Caco-2 (cell line): ENCODE measurements at regions of chr10 and their contacts with region 1.

Region 1: GRCh38 chr10:21495752-21496342 is 29.6 kb downstream of the SKIDA1 start:
- DNase-seq: peak; percentile 95 to 99
- H3K4me3 ChIP-seq: peak overlapping the region; percentile 92
- H3K4me3 Mint-ChIP-seq: peak overlapping the region; percentile 85
- H3K27ac Mint-ChIP-seq: peak overlapping the region; percentile 69
- H3K4me1 ChIP-seq: no peaks in the 10 kb centered on the region
- H3K4me1 Mint-ChIP-seq: no peaks in the 10 kb centered on the region
- H3K27me3 ChIP-seq: no peaks in the 10 kb centered on the region
- H3K27me3 Mint-ChIP-seq: no peaks in the 10 kb centered on the region
- CTCF ChIP-seq: peak; percentile 88 to 99

Region 2: DNA sequence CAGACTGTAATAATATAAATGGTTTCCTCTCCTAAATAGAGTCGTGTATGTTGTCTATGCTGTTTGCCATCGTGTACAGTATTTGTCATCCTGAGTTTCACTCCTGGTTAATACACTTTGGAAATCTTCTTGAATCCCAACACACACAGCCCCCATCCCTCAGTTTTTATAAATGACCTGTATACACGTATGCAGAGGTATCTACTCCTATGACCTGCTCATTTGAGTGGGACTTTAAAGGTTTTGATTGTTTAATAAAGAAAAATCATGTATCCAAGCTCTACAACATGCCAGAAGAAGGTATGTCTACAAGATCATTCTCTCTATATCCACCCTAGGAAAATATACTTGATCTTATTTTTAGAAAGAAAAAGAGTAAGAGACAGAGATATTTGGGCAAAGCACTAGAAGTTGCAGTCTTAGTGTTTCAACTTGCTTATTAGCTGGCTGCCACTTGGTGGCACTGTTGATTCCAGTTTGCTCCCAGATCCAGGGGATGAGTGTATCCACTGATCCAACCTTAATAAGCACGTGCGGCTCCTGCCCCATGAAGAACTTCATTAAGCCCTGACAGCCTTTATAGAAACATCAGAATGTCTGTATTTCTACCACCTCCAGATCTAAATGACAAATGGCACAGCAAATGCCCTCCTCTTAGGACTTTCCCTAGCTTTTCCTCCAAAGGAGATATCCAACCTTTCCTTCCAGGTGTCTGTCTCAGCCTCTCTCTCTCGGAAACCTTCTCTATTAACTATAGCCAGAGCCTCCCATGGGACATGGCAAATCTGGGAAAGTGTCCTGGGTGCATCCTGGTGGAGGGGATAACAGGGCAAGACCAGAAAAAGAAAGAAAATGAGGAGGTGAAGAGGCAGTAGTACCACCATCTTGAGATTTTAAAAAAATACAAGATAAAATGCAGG is 417.2 kb before region 1 on chr10:
- CTCF ChIA-PET with region 1: no interaction called
- POLR2A ChIA-PET with region 1: no interaction called
- intact Hi-C with region 1: loop called (anchors 1 kb)
- DNase-seq: peak; percentile 78 to 84
- H3K4me3 ChIP-seq: no peak overlapping the region
- H3K4me3 Mint-ChIP-seq: no peak overlapping the region
- H3K27ac Mint-ChIP-seq: peak overlapping the region; percentile 23
- H3K4me1 ChIP-seq: 0 out of 2 replicates have a peak, but pooled peaks cover 6% of the 10 kb centered on the region
- H3K4me1 Mint-ChIP-seq: peaks cover 15% of the 10 kb centered on the region
- H3K27me3 ChIP-seq: no peaks in the 10 kb centered on the region
- H3K27me3 Mint-ChIP-seq: no peaks in the 10 kb centered on the region
- CTCF ChIP-seq: peak; percentile 92 to 97

Region 3: DNA sequence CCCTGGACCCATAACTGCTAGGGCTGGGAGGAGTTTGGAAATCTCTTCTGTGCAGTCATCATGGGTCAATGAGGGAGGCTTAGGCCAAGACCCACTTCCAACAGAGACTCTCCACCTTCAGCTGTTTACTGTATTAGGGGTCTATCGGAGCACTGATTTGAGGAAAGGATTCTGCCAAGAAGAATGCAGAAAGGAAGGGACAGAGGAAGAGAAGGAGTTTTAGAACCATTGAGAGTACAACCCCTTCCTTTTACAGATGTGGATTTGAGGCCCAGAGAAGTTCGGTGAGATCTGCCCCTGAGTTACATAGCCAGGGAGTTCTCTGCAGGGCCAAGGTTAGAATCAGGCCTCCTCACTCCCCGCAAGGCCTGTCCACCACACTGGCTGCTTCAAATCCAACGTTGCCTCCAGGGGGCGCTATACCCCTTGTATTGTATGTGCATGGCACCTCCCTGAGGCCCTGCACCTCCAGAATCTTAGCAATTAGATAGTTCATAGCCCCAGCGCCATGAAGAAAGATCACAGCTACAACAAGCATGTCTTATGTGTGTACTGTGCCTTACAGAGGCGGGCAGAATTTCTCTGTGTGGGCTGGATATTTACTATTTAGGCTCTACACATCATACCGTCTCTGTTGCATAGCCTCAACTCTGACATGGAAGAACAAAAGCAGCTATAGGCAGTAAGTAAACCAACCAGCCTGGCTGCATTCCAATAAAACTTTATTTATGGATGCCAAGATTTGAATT is 217.2 kb before region 1 on chr10:
- CTCF ChIA-PET with region 1: interaction called, 17 read pairs
- POLR2A ChIA-PET with region 1: no interaction called
- intact Hi-C with region 1: loop called (anchors 1 kb)
- DNase-seq: peak; percentile 96 to 97
- H3K4me3 ChIP-seq: no peak overlapping the region
- H3K4me3 Mint-ChIP-seq: no peak overlapping the region
- H3K27ac Mint-ChIP-seq: peak overlapping the region; percentile 50
- H3K4me1 ChIP-seq: peaks cover 29% of the 10 kb centered on the region
- H3K4me1 Mint-ChIP-seq: peaks cover 34% of the 10 kb centered on the region
- H3K27me3 ChIP-seq: no peaks in the 10 kb centered on the region
- H3K27me3 Mint-ChIP-seq: no peaks in the 10 kb centered on the region
- CTCF ChIP-seq: peak; percentile 89 to 95

Region 4: GRCh38 chr10:21516242-21517131 is 20.6 kb after region 1 on chr10:
- CTCF ChIA-PET with region 1: interaction called, 25 read pairs
- POLR2A ChIA-PET with region 1: interaction called, 21 read pairs
- intact Hi-C with region 1: loop called (anchors 1 kb)
- DNase-seq: peak; percentile 76 to 85
- H3K4me3 ChIP-seq: peak overlapping the region; percentile 71
- H3K4me3 Mint-ChIP-seq: peak overlapping the region; percentile 92
- H3K27ac Mint-ChIP-seq: peak overlapping the region; percentile 80
- H3K4me1 ChIP-seq: peaks cover 47% of the 10 kb centered on the region
- H3K4me1 Mint-ChIP-seq: peaks cover 59% of the 10 kb centered on the region
- H3K27me3 ChIP-seq: no peaks in the 10 kb centered on the region
- H3K27me3 Mint-ChIP-seq: no peaks in the 10 kb centered on the region
- CTCF ChIP-seq: no peak

Region 5: GRCh38 chr10:21533467-21534279 is 37.8 kb after region 1 on chr10 and contains the start of gene MLLT10:
- CTCF ChIA-PET with region 1: interaction called, 3 read pairs
- POLR2A ChIA-PET with region 1: interaction called, 47 read pairs
- intact Hi-C with region 1: loop called (anchors 1 kb)
- DNase-seq: peak; percentile 97 to 100
- H3K4me3 ChIP-seq: peak within 1 kb of the TSS; percentile 80
- H3K4me3 Mint-ChIP-seq: peak within 1 kb of the TSS; percentile 85
- H3K27ac Mint-ChIP-seq: peak within 1 kb of the TSS; percentile 94
- H3K4me1 ChIP-seq: peaks cover 25% of the 10 kb centered on the region
- H3K4me1 Mint-ChIP-seq: peaks cover 17% of the 10 kb centered on the region
- H3K27me3 ChIP-seq: no peaks in the 10 kb centered on the region
- H3K27me3 Mint-ChIP-seq: no peaks in the 10 kb centered on the region
- CTCF ChIP-seq: peak; percentile 30 to 44
- total RNA-seq, gene MLLT10: 84.3 and 85.3 TPM in 2 replicates

Region 6: DNA sequence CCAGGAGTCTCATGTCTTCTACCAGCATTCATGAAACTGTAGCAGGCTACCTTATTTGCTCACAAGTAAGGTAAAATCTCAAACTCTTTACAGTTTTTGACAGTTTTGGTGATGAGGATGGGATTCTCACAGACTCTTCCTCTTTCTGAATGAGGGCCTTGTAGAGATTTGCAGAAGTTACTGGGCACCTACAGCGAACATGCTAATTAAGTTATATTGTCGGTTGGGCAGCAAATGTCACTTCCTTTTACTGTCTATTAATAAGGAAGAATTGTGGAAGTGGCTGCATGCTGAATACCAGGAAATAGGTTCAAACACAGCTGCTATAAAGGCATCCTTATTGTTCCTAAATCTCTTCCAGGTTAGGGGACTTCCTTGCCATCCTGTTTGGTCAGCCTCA is 318.1 kb after region 1 on chr10:
- CTCF ChIA-PET with region 1: no interaction called
- POLR2A ChIA-PET with region 1: no interaction called
- intact Hi-C with region 1: loop called (anchors 10 kb)
- DNase-seq: no peak
- H3K4me3 ChIP-seq: no peak overlapping the region
- H3K4me3 Mint-ChIP-seq: no peak overlapping the region
- H3K27ac Mint-ChIP-seq: no peak overlapping the region
- H3K4me1 ChIP-seq: no peaks in the 10 kb centered on the region
- H3K4me1 Mint-ChIP-seq: no peaks in the 10 kb centered on the region
- H3K27me3 ChIP-seq: no peaks in the 10 kb centered on the region
- H3K27me3 Mint-ChIP-seq: no peaks in the 10 kb centered on the region
- CTCF ChIP-seq: no peak